Heart left ventricle (tissue), 16 donors: ENCODE measurements at regions of chr15 and their contacts with region 1.

Region 1: DNA sequence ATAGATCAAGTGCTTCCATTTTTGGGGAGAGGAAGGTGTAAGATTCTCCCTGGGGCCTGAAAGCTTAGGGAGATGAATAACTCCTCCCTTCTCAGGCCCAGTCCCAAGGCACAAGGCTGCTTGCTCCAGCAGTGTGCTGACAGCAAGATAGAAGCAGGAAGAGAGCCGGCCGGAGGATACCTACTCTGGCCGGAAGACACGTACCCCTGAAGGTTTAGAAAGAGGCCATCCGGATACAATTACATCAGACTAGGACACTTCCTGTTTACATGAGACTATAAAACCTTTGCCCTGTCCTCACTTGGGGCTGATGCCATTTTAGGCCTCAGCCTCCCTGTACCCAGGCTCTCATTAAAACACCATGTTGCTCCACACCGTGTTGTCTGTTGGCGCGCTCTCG is 329.9 kb downstream of the SV2B start:
- DNase-seq: no peak
- ATAC-seq: no peak
- H3K4me3 ChIP-seq: no peak overlapping the region
- H3K27ac ChIP-seq: no peak overlapping the region
- H3K4me1 ChIP-seq: no peaks in the 10 kb centered on the region
- H3K27me3 ChIP-seq: no peaks in the 10 kb centered on the region
- CTCF ChIP-seq: no peak
- POLR2A ChIP-seq: no peak

Region 2: DNA sequence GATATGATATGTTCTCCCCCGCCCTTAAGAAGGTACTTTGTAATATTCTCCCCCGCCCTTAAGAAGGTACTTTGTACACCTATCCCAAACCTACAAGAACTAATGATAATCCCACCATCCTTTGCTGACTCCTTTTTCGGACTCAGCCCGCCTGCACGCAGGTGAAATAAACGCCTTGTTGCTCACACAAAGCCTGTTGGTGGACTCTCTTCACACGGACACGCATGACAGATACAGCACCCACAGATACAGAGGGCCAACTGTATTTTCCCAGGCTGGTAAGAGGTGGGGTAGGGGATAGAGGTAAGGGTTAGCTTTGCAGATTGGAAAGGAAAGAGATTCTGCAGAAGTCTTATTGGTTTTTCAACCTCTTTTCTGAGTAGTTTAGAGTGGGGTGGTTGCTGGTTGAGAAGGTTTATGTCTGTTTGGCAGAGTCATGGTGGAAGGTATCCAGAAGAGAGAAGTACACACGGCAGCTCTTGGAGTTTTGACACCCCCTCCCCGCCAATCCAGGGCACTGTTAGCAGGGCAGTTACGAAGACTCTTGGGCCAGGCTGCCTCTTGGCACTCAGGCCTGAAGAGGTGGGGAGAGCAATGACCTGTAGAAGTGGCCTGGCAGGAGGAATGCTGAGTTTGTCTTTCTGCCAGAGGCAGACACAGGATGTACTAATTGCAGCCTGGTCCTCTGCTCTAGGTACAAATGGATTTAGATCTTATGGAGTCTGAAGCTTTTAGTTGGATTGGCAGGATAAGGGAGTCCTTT is 1291.7 kb before region 1 on chr15:
- intact Hi-C with region 1: no loop called
- DNase-seq: peak in 4 of 5 donors; percentile 26 to 72 (median 54)
- ATAC-seq: peak; percentile 65 to 89 (median 84)
- H3K4me3 ChIP-seq: no peak overlapping the region
- H3K27ac ChIP-seq: peak overlapping the region in 7 of 12 donors; percentile 0 to 43 (median 20)
- H3K4me1 ChIP-seq: peaks cover 0 to 9% (median 2%) of the 10 kb centered on the region in 12 donors
- H3K27me3 ChIP-seq: no peaks in the 10 kb centered on the region
- CTCF ChIP-seq: no peak
- POLR2A ChIP-seq: no peak

Region 3: GRCh38 chr15:91447991-91448644 is 18.1 kb after region 1 on chr15:
- intact Hi-C with region 1: loop called in 1 of 10 experiments (anchors 1 kb)
- DNase-seq: no peak
- ATAC-seq: no peak
- H3K4me3 ChIP-seq: no peak overlapping the region
- H3K27ac ChIP-seq: no peak overlapping the region
- H3K4me1 ChIP-seq: no peaks in the 10 kb centered on the region
- H3K27me3 ChIP-seq: no peaks in the 10 kb centered on the region
- CTCF ChIP-seq: no peak
- POLR2A ChIP-seq: no peak

Region 4: DNA sequence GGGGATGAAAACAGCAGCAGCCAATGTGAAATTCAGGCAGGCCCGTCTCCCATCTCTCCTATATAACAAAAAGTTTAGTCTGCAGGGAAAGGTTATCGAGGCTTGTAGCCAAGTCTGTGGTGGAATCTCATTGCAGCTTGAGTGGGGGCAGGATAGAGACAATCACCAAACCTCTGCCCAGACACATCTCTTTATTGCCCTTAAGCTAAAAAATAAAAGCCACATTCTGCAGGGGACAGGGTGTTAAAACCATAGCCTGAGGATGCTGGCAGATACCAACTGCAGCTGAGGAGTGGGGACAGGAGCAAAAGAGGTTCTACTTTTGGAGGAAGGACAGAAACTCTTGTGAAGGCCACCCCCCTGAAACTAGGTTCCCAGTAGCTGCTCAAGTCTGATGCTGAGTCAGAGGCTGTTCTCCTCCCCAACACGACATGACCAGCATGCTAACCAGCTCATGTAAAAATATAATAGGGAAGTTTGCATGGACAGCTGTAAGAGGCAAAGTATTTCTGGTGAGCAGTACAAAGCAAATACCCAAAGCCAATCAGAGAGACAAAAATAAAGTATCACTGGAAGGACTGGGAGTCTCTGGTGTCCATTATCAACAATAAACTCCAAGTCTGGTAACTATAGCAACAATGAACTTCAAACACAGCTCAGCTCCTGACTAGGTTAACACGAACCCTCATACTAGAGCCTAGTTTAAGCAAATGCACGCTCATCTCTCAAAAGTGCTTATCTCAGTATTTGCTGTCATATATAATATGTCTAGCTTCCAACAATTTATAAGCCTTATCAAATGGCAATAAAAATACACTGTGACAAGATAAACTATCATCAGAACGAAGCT is 61.4 kb after region 1 on chr15:
- intact Hi-C with region 1: no loop called
- DNase-seq: no peak
- ATAC-seq: no peak
- H3K4me3 ChIP-seq: no peak overlapping the region
- H3K27ac ChIP-seq: no peak overlapping the region
- H3K4me1 ChIP-seq: no peaks in the 10 kb centered on the region
- H3K27me3 ChIP-seq: no peaks in the 10 kb centered on the region
- CTCF ChIP-seq: no peak
- POLR2A ChIP-seq: no peak